ENCODE measurements at regions of chr22 and their contacts with region 1.

Region 1: GRCh38 chr22:47586020-47586419 is 823.6 kb downstream of the TBC1D22A start:
- DNase-seq: no peak
- H3K4me3 Mint-ChIP-seq: no peak overlapping the region
- H3K27ac Mint-ChIP-seq: no peak overlapping the region
- H3K4me1 Mint-ChIP-seq: peaks cover 7% of the 10 kb centered on the region
- H3K27me3 Mint-ChIP-seq: no peaks in the 10 kb centered on the region
- CTCF ChIP-seq: peak; percentile 20

Region 2: GRCh38 chr22:46845296-46846149 is 740.5 kb before region 1 on chr22:
- CTCF ChIA-PET with region 1: no interaction called
- POLR2A ChIA-PET with region 1: no interaction called
- intact Hi-C with region 1: loop called (anchors 5 kb)
- DNase-seq: no peak
- H3K4me3 Mint-ChIP-seq: no peak overlapping the region
- H3K27ac Mint-ChIP-seq: no peak overlapping the region
- H3K4me1 Mint-ChIP-seq: peaks cover 53% of the 10 kb centered on the region
- H3K27me3 Mint-ChIP-seq: no peaks in the 10 kb centered on the region
- CTCF ChIP-seq: peak; percentile 14

Region 3: DNA sequence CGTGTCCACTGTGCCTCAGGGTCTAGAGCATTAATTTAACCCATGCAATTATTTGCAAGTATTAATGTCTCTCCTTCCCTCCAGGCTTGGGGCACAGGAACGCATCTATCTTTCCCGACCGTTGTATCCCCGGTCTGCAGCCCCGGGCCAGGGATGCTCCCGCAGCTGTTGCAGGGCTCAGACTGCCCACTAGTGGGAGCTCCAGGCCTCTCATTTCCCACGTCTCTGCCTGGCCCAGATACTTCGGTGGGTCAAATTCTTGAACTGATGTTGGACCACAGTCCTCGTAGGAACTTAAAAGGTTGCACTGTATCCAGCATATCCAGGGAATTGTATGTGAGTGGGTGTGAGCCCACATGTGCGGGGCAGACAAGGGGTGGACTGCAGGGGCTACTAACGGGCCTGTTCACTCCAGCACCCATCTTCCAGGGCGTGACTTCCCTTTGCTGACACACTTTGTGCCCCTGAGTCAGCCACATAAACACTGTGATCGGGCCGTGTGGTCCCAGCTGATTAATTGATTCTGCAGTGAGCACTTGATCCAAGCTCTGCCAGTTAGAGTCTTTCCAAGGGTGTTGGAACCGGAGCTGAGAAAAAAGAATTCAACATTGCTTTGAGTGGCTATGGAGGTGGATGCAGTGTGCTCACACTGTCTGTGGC is 372.3 kb before region 1 on chr22:
- CTCF ChIA-PET with region 1: no interaction called
- POLR2A ChIA-PET with region 1: no interaction called
- intact Hi-C with region 1: loop called (anchors 5 kb)
- DNase-seq: peak; percentile 32
- H3K4me3 Mint-ChIP-seq: no peak overlapping the region
- H3K27ac Mint-ChIP-seq: no peak overlapping the region
- H3K4me1 Mint-ChIP-seq: peaks cover 5% of the 10 kb centered on the region
- H3K27me3 Mint-ChIP-seq: no peaks in the 10 kb centered on the region
- CTCF ChIP-seq: peak; percentile 77

Region 4: DNA sequence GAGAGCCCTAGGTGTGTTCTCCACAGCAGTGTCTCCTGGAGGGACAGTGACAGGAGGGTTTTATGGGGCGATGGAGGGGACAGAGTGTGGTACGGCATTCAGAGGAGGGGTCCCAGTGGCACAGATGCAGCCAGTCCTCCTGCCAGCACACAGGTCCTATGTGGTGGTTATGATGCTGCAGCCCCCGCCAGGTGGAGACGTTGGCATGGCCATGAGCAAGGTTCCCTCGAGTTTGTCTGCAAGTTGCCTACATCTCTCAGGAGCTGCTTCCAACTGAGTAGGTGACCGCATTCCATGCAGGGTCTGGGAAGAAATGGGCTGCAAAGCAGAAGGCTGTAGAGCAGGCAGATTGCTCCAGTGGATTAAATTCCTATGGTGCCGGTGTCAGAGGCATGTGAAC is 177.6 kb before region 1 on chr22:
- CTCF ChIA-PET with region 1: no interaction called
- POLR2A ChIA-PET with region 1: no interaction called
- intact Hi-C with region 1: loop called (anchors 1 kb)
- DNase-seq: peak; percentile 2
- H3K4me3 Mint-ChIP-seq: no peak overlapping the region
- H3K27ac Mint-ChIP-seq: no peak overlapping the region
- H3K4me1 Mint-ChIP-seq: peaks cover 4% of the 10 kb centered on the region
- H3K27me3 Mint-ChIP-seq: peaks cover 38% of the 10 kb centered on the region
- CTCF ChIP-seq: peak; percentile 37

Region 5: DNA sequence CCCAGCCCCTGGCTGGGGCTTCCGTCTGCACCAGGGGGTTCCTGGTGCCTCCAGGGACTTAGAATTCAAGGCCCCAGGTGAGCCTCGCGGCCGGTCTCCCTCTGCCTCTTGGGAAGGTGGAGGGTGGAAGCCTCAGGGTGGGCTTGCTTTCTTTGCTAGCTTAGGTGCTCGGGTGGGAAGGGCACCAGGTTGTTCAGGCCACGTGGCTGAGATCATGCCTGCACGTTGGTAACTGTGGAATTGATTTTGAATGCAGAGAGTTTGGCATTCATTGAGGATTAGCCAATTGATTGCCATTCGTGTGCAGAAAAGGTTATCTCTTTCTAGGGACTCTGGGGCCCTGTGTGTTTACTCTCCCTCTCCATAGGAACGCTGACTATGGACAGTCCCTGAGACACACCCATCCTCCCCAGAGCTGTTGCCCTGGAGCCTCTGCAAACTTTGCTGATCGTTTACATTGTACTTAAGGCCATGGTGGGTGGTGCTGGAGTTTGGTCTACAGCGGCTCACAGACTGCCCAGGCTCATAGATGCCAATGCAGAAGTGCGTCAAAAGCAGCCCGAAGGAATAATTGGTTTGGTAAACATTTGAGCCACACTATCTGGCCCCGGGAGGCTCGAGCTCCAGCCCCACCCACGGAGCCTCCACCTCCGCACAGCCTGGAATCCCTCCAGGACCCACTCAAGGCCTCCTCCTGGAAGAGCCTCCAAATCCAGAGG is 783.9 kb after region 1 on chr22:
- CTCF ChIA-PET with region 1: no interaction called
- POLR2A ChIA-PET with region 1: no interaction called
- intact Hi-C with region 1: no loop called
- DNase-seq: no peak
- H3K4me3 Mint-ChIP-seq: no peak overlapping the region
- H3K27ac Mint-ChIP-seq: no peak overlapping the region
- H3K4me1 Mint-ChIP-seq: no peaks in the 10 kb centered on the region
- H3K27me3 Mint-ChIP-seq: no peaks in the 10 kb centered on the region
- CTCF ChIP-seq: no peak